HCT116 (cell line): ENCODE measurements at regions of chr4 and their contacts with region 1.

Region 1: DNA sequence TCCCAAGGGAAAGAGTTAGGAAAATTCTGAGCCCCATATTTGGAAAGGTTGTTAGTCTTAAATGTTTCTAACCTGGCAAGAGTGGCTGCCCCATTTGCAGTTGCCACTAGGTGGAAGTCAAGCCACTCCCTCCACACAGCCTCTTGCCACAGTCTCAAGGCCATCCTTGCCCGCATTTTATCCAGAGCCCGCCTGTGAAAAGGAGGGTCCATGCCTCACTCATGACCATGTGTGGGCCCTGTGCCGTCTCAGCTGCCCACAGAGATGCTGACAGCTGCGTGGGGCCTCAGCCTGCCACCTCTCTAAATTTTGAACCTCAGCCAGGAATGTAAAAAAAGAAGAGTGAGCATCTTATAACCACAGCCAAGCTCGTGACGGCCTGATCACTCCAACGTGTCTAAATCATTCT is 201.5 kb upstream of the FAM241A start:
- DNase-seq: peak; percentile 66
- ATAC-seq: peak; percentile 99
- H3K4me3 ChIP-seq: no peak overlapping the region
- H3K27ac ChIP-seq: no peak overlapping the region
- H3K4me1 ChIP-seq: 0 out of 4 replicates have a peak, but pooled peaks cover 0 to 2% of the 10 kb centered on the region in 2 experiments
- H3K27me3 ChIP-seq: no peaks in the 10 kb centered on the region
- CTCF ChIP-seq: peak; percentile 73 to 79 (median 74)
- POLR2A ChIP-seq: no peak
- RAD21 ChIP-seq: peak; percentile 92

Region 2: DNA sequence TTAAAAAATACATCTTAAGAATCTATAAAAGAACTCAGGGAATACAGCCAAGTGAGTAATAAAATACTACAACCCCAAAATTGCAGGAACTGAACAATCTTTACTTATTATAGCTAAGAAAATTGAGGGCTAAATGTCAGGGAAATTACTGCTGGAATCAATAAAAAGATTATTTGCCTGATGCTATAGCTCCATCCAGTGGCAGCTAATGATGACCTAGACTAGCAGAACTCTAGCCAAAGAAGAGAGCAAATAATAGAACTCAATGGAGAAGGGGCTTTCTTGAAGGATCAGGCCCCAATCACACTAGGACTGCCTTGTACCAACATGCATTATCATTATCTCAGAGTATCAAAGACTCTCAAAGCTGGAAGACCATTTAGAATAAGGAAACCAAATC is 116.4 kb after region 1 on chr4:
- CTCF ChIA-PET with region 1: interaction called, 30 read pairs
- POLR2A ChIA-PET with region 1: no interaction called
- RAD21 ChIA-PET with region 1: interaction called in 1 of 2 experiments, 6 read pairs
- intact Hi-C with region 1: no loop called
- DNase-seq: peak; percentile 33
- ATAC-seq: peak; percentile 81
- H3K4me3 ChIP-seq: no peak overlapping the region
- H3K27ac ChIP-seq: no peak overlapping the region
- H3K4me1 ChIP-seq: peaks cover 0 to 7% of the 10 kb centered on the region in 2 experiments; a peak in 1 of 4 replicates
- H3K27me3 ChIP-seq: no peaks in the 10 kb centered on the region
- CTCF ChIP-seq: peak; percentile 68 to 77 (median 72)
- POLR2A ChIP-seq: no peak
- RAD21 ChIP-seq: peak; percentile 87